H1 (cell line): ENCODE measurements at regions of chr3 and their contacts with region 1.

Region 1: DNA sequence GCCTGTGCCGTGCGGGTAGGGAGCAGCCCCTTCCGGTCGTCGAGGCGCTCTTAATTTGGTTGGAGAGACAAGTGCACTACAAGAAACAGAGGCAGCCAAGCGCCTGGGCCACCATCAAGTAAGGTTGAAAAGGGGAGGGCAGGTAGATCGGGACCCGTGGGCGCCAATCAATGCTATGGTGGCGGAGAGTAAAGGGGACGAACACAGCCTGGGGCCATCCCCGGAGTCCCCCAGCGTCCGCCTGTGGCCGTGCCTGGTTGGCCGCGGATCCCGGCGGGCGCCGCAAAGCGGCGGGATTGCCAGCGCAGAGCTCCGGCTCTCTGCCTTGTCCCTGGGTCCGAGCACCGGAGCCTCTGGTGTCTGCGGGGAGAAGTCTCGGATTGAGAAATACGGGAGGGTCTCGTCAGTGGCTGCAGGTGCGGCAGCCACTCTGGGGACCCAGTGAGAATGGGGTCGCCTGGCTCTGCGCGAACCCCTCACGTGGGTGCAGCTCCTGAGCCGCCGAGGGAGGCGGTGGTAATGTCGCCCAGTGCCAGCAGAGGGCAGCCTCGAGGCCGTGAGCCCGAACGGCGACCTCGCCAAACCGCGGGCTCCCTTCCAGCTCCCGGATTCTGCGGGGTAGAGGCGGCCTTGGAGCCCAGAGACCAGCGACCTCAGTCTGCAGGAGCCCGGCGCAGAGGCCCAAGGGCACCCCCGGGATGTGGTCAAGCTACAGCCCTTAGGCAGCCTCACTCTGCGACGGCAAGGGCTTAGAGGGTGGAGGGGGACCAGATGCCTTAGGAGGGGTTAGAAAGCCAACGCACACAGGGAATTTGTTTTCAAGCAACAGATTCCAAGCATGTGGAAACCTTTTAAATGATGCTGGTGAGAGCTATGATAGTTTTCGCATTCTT is 10.8 kb downstream of the FOXL2 start:
- DNase-seq: peak in 1 of 2 experiments; percentile 99
- H3K4me3 ChIP-seq: peak overlapping the region; percentile 11 to 59 (median 39); a peak in 7 of 8 replicates
- H3K27ac ChIP-seq: no peak overlapping the region
- H3K4me1 ChIP-seq: peaks cover 9 to 28% (median 19%) of the 10 kb centered on the region in 4 experiments
- H3K27me3 ChIP-seq: peaks cover 46 to 69% (median 59%) of the 10 kb centered on the region in 4 experiments
- CTCF ChIP-seq: peak in 2 of 3 experiments; percentile 84 to 86; a peak in 3 of 4 replicates
- EP300 ChIP-seq: no peak
- POLR2A ChIP-seq: no peak; a peak in 1 of 3 replicates
- RAD21 ChIP-seq: peak; percentile 32 to 63; a peak in 3 of 4 replicates

Region 2: DNA sequence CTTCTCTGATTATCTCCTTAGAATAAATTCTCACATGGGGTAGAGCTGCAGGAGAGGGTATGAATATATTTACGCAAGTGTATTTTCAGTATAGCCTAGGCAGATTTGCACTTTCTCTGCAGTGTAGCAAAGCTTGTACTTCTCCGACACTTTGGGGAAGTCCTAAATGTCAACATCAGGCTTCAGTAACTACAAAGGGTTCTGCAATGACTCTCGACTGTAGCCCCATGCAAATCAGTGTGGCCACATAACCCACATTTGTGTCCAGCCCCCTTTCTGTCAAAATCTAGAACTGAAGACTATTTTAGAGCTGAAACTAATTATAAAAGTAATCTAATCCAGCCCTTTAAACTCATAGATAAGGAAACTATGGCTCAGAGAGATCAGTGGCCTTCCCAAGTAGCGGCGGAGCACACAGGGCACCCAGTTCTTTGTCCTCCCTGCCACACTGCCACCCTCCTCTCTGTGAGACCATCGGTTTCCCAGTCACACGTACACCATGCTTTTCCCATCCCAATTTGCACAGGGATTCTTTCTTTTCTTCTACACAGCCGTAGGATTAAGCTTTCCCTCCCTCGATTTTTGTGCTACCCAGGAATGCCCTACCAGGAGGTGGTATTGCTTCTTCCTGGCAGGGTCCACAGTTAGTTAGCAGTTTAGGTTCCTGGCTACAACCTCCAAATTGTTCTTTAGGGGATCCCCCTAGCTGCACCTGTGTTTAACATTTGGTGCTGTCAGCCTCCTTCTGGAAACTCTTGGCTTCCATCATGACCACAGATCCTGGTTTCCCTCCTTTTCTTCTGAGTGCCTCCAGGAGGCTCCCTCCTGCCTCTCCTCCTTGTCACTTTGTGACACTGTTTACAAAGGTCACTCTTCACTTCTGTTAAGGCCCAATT is 564.8 kb before region 1 on chr3:
- CTCF ChIA-PET with region 1: no interaction called
- POLR2A ChIA-PET with region 1: no interaction called
- DNase-seq: no peak
- H3K4me3 ChIP-seq: no peak overlapping the region
- H3K27ac ChIP-seq: no peak overlapping the region
- H3K4me1 ChIP-seq: no peaks in the 10 kb centered on the region
- H3K27me3 ChIP-seq: no peaks in the 10 kb centered on the region
- CTCF ChIP-seq: no peak
- EP300 ChIP-seq: no peak
- POLR2A ChIP-seq: no peak
- RAD21 ChIP-seq: peak in 1 of 2 experiments; percentile 16; a peak in 1 of 4 replicates

Region 3: GRCh38 chr3:138890555-138891187 is 45.4 kb before region 1 on chr3:
- CTCF ChIA-PET with region 1: no interaction called
- POLR2A ChIA-PET with region 1: no interaction called
- DNase-seq: no peak
- H3K4me3 ChIP-seq: no peak overlapping the region
- H3K27ac ChIP-seq: no peak overlapping the region
- H3K4me1 ChIP-seq: no peaks in the 10 kb centered on the region
- H3K27me3 ChIP-seq: no peaks in the 10 kb centered on the region
- CTCF ChIP-seq: no peak
- EP300 ChIP-seq: no peak
- POLR2A ChIP-seq: no peak
- RAD21 ChIP-seq: no peak

Region 4: DNA sequence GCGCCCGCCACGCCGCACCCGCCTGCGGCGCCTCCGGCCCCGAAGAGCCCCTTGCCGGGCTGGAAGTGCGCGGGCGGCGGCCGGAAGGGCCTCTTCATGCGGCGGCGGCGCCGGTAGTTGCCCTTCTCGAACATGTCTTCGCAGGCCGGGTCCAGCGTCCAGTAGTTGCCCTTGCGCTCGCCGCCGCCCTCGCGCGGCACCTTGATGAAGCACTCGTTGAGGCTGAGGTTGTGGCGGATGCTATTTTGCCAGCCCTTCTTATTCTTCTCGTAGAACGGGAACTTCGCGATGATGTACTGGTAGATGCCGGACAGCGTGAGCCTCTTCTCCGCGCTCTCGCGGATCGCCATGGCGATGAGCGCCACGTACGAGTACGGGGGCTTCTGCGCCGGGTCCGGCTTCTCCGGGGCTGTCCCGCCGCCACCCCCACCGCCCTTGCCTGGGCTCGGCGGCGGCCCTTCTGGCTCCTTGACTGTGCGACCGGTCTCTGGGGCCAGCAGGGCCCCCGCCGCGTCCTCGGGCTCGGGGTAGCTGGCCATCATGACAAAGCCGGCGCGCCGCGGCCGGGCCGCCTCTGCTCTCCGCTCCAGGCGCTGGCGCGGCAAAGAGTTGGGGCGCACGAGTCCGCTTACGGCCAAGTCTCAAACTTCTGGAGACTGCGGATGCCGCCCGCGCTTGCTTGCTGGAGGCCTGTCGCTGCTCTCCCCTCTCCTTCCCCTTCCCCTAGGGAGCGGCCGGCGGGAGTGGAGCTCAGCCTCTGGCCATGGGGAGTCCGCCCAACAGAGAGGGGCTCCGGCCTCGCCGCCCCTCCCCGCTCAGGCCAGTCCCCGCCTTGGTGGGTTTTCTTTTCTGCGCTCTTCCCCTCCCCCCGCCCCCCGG is 10.3 kb after region 1 on chr3:
- CTCF ChIA-PET with region 1: interaction called, 78 read pairs
- POLR2A ChIA-PET with region 1: interaction called, 149 read pairs
- DNase-seq: peak in 1 of 2 experiments; percentile 79
- H3K4me3 ChIP-seq: peak overlapping the region; percentile 37 to 67 (median 46)
- H3K27ac ChIP-seq: no peak overlapping the region
- H3K4me1 ChIP-seq: peaks cover 7 to 50% (median 21%) of the 10 kb centered on the region in 4 experiments
- H3K27me3 ChIP-seq: peaks cover 83 to 100% (median 96%) of the 10 kb centered on the region in 4 experiments
- CTCF ChIP-seq: peak in 2 of 3 experiments; percentile 41 to 48; a peak in 3 of 4 replicates
- EP300 ChIP-seq: no peak
- POLR2A ChIP-seq: peak in 1 of 2 experiments; percentile 14; a peak in 1 of 3 replicates
- RAD21 ChIP-seq: no peak

Region 5: GRCh38 chr3:139020868-139021234 is 84.8 kb after region 1 on chr3 and contains the start of gene PRR23B:
- CTCF ChIA-PET with region 1: no interaction called
- POLR2A ChIA-PET with region 1: no interaction called
- DNase-seq: peak in 1 of 2 experiments; percentile 51
- H3K4me3 ChIP-seq: no peak within 1 kb of the TSS
- H3K27ac ChIP-seq: no peak within 1 kb of the TSS
- H3K4me1 ChIP-seq: no peaks in the 10 kb centered on the region
- H3K27me3 ChIP-seq: no peaks in the 10 kb centered on the region
- CTCF ChIP-seq: peak in 2 of 3 experiments; percentile 32 to 47; a peak in 2 of 4 replicates
- EP300 ChIP-seq: no peak
- POLR2A ChIP-seq: no peak
- RAD21 ChIP-seq: peak in 1 of 2 experiments; percentile 12; a peak in 1 of 4 replicates
- total RNA-seq, gene PRR23B: not detected in 2 replicates

Region 6: DNA sequence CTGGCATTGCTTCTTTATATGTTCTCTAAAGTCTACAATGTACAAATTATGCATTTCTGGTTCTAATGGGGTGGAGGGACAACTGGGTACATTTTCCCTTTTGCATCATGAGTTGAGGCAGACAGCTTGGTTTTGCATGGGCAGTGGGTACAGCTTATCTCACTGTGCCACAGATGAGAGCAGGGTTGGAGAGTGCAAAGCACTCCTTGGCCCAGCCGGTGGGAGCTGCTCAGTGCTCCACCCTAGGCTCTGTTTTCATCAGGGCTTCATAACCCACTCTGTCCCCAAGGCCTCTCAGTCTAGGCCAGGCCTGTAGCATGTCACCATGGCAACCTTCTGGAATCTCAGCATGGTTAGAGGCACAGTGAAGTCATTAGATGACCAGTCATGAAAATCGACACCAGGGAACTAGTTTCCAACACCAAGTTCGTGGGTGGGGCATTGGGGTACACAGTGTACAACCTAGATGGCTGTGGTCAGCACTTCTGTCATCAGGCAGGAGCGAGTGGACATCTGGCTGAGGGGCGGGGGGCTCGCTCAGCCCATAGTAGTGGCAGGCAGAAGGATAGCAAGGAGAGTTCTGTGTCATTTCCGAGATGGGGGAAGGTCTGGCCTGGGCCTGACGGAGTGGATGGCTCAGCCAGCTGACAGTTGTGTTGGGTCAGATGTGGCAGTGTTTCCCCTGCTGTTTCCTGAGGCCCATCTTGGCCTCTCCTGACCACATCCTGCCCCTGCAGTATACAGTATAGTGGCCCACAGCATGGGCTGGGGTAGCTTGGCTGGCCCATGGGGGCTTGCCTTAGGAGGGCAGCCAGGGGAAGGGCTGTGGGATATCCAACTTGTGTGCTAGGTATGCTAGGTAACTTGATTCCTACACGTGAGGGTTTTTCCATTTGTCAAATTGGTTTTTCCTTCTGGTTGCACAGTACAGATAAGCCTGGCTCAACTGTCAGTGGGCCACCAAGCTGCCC is 184.3 kb after region 1 on chr3:
- CTCF ChIA-PET with region 1: no interaction called
- POLR2A ChIA-PET with region 1: no interaction called
- DNase-seq: peak in 1 of 2 experiments; percentile 38
- H3K4me3 ChIP-seq: no peak overlapping the region
- H3K27ac ChIP-seq: no peak overlapping the region
- H3K4me1 ChIP-seq: no peaks in the 10 kb centered on the region; a peak in 1 of 7 replicates
- H3K27me3 ChIP-seq: no peaks in the 10 kb centered on the region
- CTCF ChIP-seq: no peak
- EP300 ChIP-seq: no peak
- POLR2A ChIP-seq: no peak
- RAD21 ChIP-seq: no peak